CD4-positive, alpha-beta T cell (primary cell): ENCODE measurements at regions of chr2 and their contacts with region 1.

Region 1: DNA sequence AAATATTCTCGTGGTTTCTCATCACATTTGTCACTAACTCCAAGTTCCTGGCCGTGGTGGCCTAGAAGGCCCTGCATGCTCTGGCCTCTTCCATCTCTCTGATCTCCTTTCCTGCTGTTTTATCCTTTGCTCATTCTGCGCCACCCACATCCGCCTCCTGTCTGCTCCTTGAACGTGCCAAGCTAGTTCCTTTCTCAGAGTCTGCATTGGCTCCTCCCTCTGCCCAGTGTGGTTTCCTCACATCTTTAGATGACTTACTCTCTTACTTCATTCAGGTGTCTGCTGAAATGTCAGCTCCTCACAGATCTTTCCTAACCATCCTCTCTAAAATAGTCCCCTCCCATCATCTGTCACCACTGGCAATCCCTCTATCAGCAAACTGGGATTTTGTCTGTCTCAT is 158.6 kb upstream of the RBMS1 start:
- DNase-seq: peak; percentile 36 to 84 (median 62)
- ATAC-seq: peak; percentile 99
- H3K4me3 ChIP-seq: no peak overlapping the region
- H3K4me3 Mint-ChIP-seq: peak overlapping the region; percentile 23
- H3K27ac ChIP-seq: no peak overlapping the region
- H3K27ac Mint-ChIP-seq: peak overlapping the region; percentile 0
- H3K4me1 ChIP-seq: peaks cover 19% of the 10 kb centered on the region
- H3K4me1 Mint-ChIP-seq: peaks cover 30% of the 10 kb centered on the region
- H3K27me3 ChIP-seq: no peaks in the 10 kb centered on the region
- H3K27me3 Mint-ChIP-seq: peaks cover 7% of the 10 kb centered on the region
- CTCF ChIP-seq: no peak

Region 2: DNA sequence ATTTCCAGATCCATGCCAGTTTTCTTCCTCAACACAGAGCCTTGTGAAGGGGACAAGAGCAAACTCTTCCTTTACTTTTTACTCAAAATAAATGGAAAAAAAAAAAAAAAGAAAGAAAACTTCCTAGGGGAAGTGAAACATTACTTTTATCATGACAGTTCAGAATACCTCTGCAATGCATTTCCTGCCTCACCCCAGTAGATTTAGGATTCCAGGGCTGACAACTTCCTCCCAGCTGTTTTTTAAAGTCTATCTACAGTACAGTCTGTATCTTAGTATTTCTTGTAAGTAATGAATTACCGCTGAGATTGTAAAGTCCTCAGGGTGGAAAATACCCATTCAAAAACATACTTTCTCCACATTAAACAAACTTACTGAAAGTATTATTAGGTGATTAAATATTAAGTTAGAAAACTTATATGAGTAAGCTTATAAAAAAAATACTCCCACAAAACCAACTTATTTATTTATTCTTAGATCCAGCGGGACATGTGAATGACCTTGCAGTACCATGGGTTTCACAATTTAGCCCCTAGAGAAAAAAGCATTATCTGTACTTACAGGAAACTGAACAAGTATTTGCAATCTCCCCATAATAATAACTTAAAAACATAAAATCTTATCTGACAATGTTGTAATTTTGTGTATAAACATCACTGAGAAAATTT is 276.3 kb before region 1 on chr2:
- CTCF ChIA-PET with region 1: interaction called, 3 read pairs
- POLR2A ChIA-PET with region 1: interaction called, 5 read pairs
- intact Hi-C with region 1: loop called in 1 of 2 experiments (anchors 10 kb)
- DNase-seq: peak in 2 of 14 experiments; percentile 41 to 47
- ATAC-seq: peak; percentile 79
- H3K4me3 ChIP-seq: no peak overlapping the region
- H3K4me3 Mint-ChIP-seq: peak overlapping the region; percentile 62
- H3K27ac ChIP-seq: no peak overlapping the region
- H3K27ac Mint-ChIP-seq: peak overlapping the region; percentile 72
- H3K4me1 ChIP-seq: peaks cover 63% of the 10 kb centered on the region
- H3K4me1 Mint-ChIP-seq: peaks cover 98% of the 10 kb centered on the region
- H3K27me3 ChIP-seq: no peaks in the 10 kb centered on the region
- H3K27me3 Mint-ChIP-seq: no peaks in the 10 kb centered on the region
- CTCF ChIP-seq: no peak

Region 3: GRCh38 chr2:160482673-160483072 is 169.6 kb before region 1 on chr2:
- CTCF ChIA-PET with region 1: no interaction called
- POLR2A ChIA-PET with region 1: no interaction called
- intact Hi-C with region 1: loop called in 1 of 2 experiments (anchors 5 kb)
- DNase-seq: peak in 9 of 14 experiments; percentile 4 to 87 (median 35)
- ATAC-seq: peak; percentile 94
- H3K4me3 ChIP-seq: no peak overlapping the region
- H3K4me3 Mint-ChIP-seq: peak overlapping the region; percentile 68
- H3K27ac ChIP-seq: peak overlapping the region; percentile 39 to 55
- H3K27ac Mint-ChIP-seq: peak overlapping the region; percentile 85
- H3K4me1 ChIP-seq: peaks cover 41% of the 10 kb centered on the region
- H3K4me1 Mint-ChIP-seq: peaks cover 90% of the 10 kb centered on the region
- H3K27me3 ChIP-seq: no peaks in the 10 kb centered on the region
- H3K27me3 Mint-ChIP-seq: no peaks in the 10 kb centered on the region
- CTCF ChIP-seq: no peak

Region 4: GRCh38 chr2:161938339-161938738 is 1286.1 kb after region 1 on chr2:
- CTCF ChIA-PET with region 1: no interaction called
- POLR2A ChIA-PET with region 1: no interaction called
- intact Hi-C with region 1: no loop called
- DNase-seq: no peak
- ATAC-seq: no peak
- H3K4me3 ChIP-seq: no peak overlapping the region
- H3K4me3 Mint-ChIP-seq: no peak overlapping the region
- H3K27ac ChIP-seq: no peak overlapping the region
- H3K27ac Mint-ChIP-seq: no peak overlapping the region
- H3K4me1 ChIP-seq: no peaks in the 10 kb centered on the region
- H3K4me1 Mint-ChIP-seq: no peaks in the 10 kb centered on the region
- H3K27me3 ChIP-seq: no peaks in the 10 kb centered on the region
- H3K27me3 Mint-ChIP-seq: peaks cover 5% of the 10 kb centered on the region
- CTCF ChIP-seq: no peak